ENCODE measurements at regions of chr1 and their contacts with region 1.

Region 1: GRCh38 chr1:12148160-12148957 is 18.4 kb upstream of the TNFRSF1B start:
- DNase-seq: no peak
- H3K4me3 ChIP-seq: no peak overlapping the region
- H3K27ac ChIP-seq: no peak overlapping the region
- H3K4me1 ChIP-seq: peaks cover 0 to 13% (median 6%) of the 10 kb centered on the region in 4 donors
- H3K27me3 ChIP-seq: no peaks in the 10 kb centered on the region
- CTCF ChIP-seq: no peak

Region 2: GRCh38 chr1:10734927-10735584 is 1413.3 kb before region 1 on chr1:
- intact Hi-C with region 1: loop called (anchors 5 kb)
- DNase-seq: no peak
- H3K4me3 ChIP-seq: no peak overlapping the region
- H3K27ac ChIP-seq: no peak overlapping the region
- H3K4me1 ChIP-seq: peaks cover 0 to 41% (median 4%) of the 10 kb centered on the region in 4 donors
- H3K27me3 ChIP-seq: peaks cover 0 to 9% of the 10 kb centered on the region in 2 donors
- CTCF ChIP-seq: no peak